Activated CD4-positive, alpha-beta T cell treated with anti-CD3 and anti-CD28 coated beads for 36 hours (primary cell): ENCODE measurements at regions of chr4 and their contacts with region 1.

Region 1: GRCh38 chr4:38310446-38311043 is 350.3 kb downstream of the PTTG2 start:
- DNase-seq: peak; percentile 84
- ATAC-seq: peak; percentile 87
- H3K4me3 Mint-ChIP-seq: peak overlapping the region; percentile 14
- H3K27ac Mint-ChIP-seq: peak overlapping the region; percentile 78
- H3K4me1 Mint-ChIP-seq: peaks cover 64% of the 10 kb centered on the region
- H3K27me3 Mint-ChIP-seq: peaks cover 18% of the 10 kb centered on the region

Region 2: DNA sequence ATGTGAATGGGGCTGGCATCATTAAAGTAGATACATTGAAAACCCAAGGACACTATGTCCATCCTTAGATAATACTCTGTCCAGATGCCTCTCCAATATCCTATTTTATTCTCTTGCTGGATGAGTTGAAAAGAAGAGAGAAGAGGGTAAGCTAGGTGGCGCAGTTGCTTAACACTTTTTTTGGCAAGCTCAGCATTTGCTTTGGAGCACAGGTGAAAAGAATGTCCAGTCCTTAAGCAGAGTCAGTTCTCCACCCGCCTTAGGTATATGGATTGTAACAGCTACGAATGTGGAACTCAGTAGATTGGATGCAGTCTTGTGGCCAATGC is 857.6 kb before region 1 on chr4:
- CTCF ChIA-PET with region 1: no interaction called
- POLR2A ChIA-PET with region 1: no interaction called
- intact Hi-C with region 1: no loop called
- DNase-seq: peak; percentile 68
- ATAC-seq: peak; percentile 70
- H3K4me3 Mint-ChIP-seq: peak overlapping the region; percentile 53
- H3K27ac Mint-ChIP-seq: no peak overlapping the region
- H3K4me1 Mint-ChIP-seq: peaks cover 15% of the 10 kb centered on the region
- H3K27me3 Mint-ChIP-seq: peaks cover 53% of the 10 kb centered on the region

Region 3: GRCh38 chr4:37891260-37892159 is 419.0 kb before region 1 on chr4:
- CTCF ChIA-PET with region 1: no interaction called
- POLR2A ChIA-PET with region 1: no interaction called
- intact Hi-C with region 1: loop called in 1 of 2 experiments (anchors 5 kb)
- DNase-seq: peak; percentile 73
- ATAC-seq: peak; percentile 78
- H3K4me3 Mint-ChIP-seq: peak overlapping the region; percentile 78
- H3K27ac Mint-ChIP-seq: peak overlapping the region; percentile 93
- H3K4me1 Mint-ChIP-seq: peaks cover 35% of the 10 kb centered on the region
- H3K27me3 Mint-ChIP-seq: peaks cover 3% of the 10 kb centered on the region

Region 4: DNA sequence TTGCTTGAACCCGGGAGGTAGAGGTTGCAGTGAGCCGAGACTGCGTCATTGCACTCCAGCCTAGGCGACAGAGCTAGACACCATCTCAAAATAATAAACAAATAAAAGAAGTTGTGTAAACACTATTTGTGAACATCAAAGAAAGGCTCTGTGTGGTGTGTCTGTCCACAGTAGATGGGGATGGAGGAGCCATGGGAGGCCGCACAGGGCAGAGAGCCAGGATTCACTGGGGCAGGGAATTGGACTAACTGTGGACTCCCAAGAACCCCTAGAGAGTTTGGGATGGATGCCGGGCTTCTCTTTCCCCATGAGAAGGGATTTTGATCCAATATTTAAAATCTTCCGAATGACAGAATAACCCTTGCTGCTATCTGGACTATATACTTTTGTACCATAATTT is 393.2 kb before region 1 on chr4:
- CTCF ChIA-PET with region 1: no interaction called
- POLR2A ChIA-PET with region 1: no interaction called
- intact Hi-C with region 1: no loop called
- DNase-seq: no peak
- ATAC-seq: no peak
- H3K4me3 Mint-ChIP-seq: no peak overlapping the region
- H3K27ac Mint-ChIP-seq: no peak overlapping the region
- H3K4me1 Mint-ChIP-seq: peaks cover 7% of the 10 kb centered on the region
- H3K27me3 Mint-ChIP-seq: no peaks in the 10 kb centered on the region

Region 5: GRCh38 chr4:38132107-38132673 is 178.4 kb before region 1 on chr4:
- CTCF ChIA-PET with region 1: interaction called, 10 read pairs
- POLR2A ChIA-PET with region 1: interaction called, 9 read pairs
- intact Hi-C with region 1: loop called (anchors 1 kb)
- DNase-seq: peak; percentile 84
- ATAC-seq: peak; percentile 62
- H3K4me3 Mint-ChIP-seq: peak overlapping the region; percentile 57
- H3K27ac Mint-ChIP-seq: peak overlapping the region; percentile 96
- H3K4me1 Mint-ChIP-seq: peaks cover 74% of the 10 kb centered on the region
- H3K27me3 Mint-ChIP-seq: peaks cover 3% of the 10 kb centered on the region

Region 6: GRCh38 chr4:38275331-38276100 is 35.0 kb before region 1 on chr4:
- CTCF ChIA-PET with region 1: no interaction called
- POLR2A ChIA-PET with region 1: no interaction called
- intact Hi-C with region 1: no loop called
- DNase-seq: no peak
- ATAC-seq: no peak
- H3K4me3 Mint-ChIP-seq: no peak overlapping the region
- H3K27ac Mint-ChIP-seq: no peak overlapping the region
- H3K4me1 Mint-ChIP-seq: no peaks in the 10 kb centered on the region
- H3K27me3 Mint-ChIP-seq: no peaks in the 10 kb centered on the region

Region 7: GRCh38 chr4:38334810-38335537 is 24.4 kb after region 1 on chr4:
- CTCF ChIA-PET with region 1: interaction called, 6 read pairs
- POLR2A ChIA-PET with region 1: no interaction called
- intact Hi-C with region 1: loop called (anchors 1 kb)
- DNase-seq: no peak
- ATAC-seq: peak; percentile 60
- H3K4me3 Mint-ChIP-seq: peak overlapping the region; percentile 13
- H3K27ac Mint-ChIP-seq: peak overlapping the region; percentile 8
- H3K4me1 Mint-ChIP-seq: peaks cover 50% of the 10 kb centered on the region
- H3K27me3 Mint-ChIP-seq: peaks cover 13% of the 10 kb centered on the region

Region 8: DNA sequence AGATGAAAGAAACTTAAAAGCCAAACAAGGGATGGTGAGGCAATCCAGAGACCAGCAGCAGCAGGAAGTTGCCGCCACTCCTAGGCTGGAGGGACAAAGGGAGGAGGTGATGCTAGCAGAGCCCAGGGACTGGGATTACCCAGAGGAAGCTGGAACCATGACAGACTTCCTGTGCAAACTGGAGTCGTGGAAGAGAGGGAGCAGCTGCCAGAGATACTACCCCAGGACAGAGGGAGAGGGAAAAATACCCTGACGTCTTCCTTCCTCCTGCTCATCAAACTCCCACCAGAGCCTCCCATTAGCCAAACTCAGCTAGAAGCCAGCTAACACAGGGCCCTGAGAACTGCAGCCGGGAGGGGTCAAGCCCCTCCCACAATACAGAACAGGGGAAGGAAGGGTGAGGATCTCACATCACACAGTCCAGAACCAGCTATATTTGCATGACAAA is 252.2 kb after region 1 on chr4:
- CTCF ChIA-PET with region 1: no interaction called
- POLR2A ChIA-PET with region 1: interaction called, 5 read pairs
- intact Hi-C with region 1: loop called in 1 of 2 experiments (anchors 2 kb)
- DNase-seq: no peak
- ATAC-seq: no peak
- H3K4me3 Mint-ChIP-seq: no peak overlapping the region
- H3K27ac Mint-ChIP-seq: no peak overlapping the region
- H3K4me1 Mint-ChIP-seq: peaks cover 19% of the 10 kb centered on the region
- H3K27me3 Mint-ChIP-seq: peaks cover 8% of the 10 kb centered on the region

Region 9: GRCh38 chr4:38620790-38621684 is 310.5 kb after region 1 on chr4:
- CTCF ChIA-PET with region 1: no interaction called
- POLR2A ChIA-PET with region 1: no interaction called
- intact Hi-C with region 1: no loop called
- DNase-seq: no peak
- ATAC-seq: no peak
- H3K4me3 Mint-ChIP-seq: no peak overlapping the region
- H3K27ac Mint-ChIP-seq: no peak overlapping the region
- H3K4me1 Mint-ChIP-seq: peaks cover 18% of the 10 kb centered on the region
- H3K27me3 Mint-ChIP-seq: no peaks in the 10 kb centered on the region

Region 10: DNA sequence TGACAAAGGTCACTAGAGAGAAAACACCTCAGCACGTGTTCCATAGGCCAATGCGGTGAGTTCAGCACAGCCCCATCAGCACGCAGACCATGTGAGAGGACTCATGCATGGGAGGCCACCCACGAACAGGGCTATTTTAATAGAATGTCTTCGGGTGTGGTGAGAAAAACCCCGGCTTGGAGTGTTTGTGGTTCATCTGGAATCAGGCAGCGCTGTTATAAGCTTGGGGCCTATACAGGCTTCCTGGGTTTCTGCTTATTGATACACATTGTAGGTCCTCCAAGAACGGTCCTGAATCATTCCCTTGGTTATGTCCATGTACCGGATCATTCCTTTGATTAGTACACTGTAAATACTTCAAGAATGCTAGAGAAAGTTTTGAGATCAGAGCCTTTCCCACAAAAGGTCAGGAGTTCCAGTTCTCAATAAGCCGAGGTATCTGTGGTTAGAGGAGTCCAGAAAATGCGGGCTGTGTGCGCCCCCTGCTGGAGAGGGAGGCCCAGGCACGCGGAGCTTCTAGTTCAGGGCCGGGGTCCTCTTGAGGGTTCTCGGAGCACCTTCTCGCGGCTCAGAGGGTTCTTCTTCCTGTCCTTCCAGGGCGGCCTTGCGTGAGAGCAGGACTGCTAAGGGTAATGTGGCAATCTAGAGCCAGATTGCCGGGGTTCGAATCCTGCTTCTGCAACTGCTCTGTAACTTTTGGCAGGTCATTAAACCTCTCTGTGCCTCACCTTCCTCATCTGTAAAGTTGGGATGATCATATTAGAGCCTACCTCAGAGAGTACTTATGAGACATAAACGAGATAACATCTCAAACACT is 420.5 kb after region 1 on chr4:
- CTCF ChIA-PET with region 1: no interaction called
- POLR2A ChIA-PET with region 1: no interaction called
- intact Hi-C with region 1: loop called (anchors 2 to 5 kb)
- DNase-seq: peak; percentile 91
- ATAC-seq: peak; percentile 80
- H3K4me3 Mint-ChIP-seq: no peak overlapping the region
- H3K27ac Mint-ChIP-seq: no peak overlapping the region
- H3K4me1 Mint-ChIP-seq: peaks cover 15% of the 10 kb centered on the region
- H3K27me3 Mint-ChIP-seq: no peaks in the 10 kb centered on the region

Region 11: GRCh38 chr4:39353478-39354253 is 1043.1 kb after region 1 on chr4:
- CTCF ChIA-PET with region 1: no interaction called
- POLR2A ChIA-PET with region 1: no interaction called
- intact Hi-C with region 1: loop called in 1 of 2 experiments (anchors 5 kb)
- DNase-seq: peak; percentile 47
- ATAC-seq: peak; percentile 85
- H3K4me3 Mint-ChIP-seq: peak overlapping the region; percentile 70
- H3K27ac Mint-ChIP-seq: peak overlapping the region; percentile 94
- H3K4me1 Mint-ChIP-seq: peaks cover 79% of the 10 kb centered on the region
- H3K27me3 Mint-ChIP-seq: no peaks in the 10 kb centered on the region